ENCODE measurements at regions of chr16 and their contacts with region 1.

Region 1: GRCh38 chr16:49350265-49351095 is 23.1 kb upstream of the C16orf78 start:
- DNase-seq: peak; percentile 86
- ATAC-seq: peak; percentile 52
- H3K4me3 Mint-ChIP-seq: no peak overlapping the region
- H3K27ac Mint-ChIP-seq: no peak overlapping the region
- H3K4me1 Mint-ChIP-seq: peaks cover 24% of the 10 kb centered on the region
- H3K27me3 Mint-ChIP-seq: peaks cover 2% of the 10 kb centered on the region; the same call in 1 of the 2 replicates
- CTCF ChIP-seq: peak; percentile 75

Region 2: GRCh38 chr16:48999508-48999907 is 351.0 kb before region 1 on chr16:
- CTCF ChIA-PET with region 1: interaction called, 11 read pairs
- POLR2A ChIA-PET with region 1: no interaction called
- DNase-seq: no peak
- ATAC-seq: no peak
- H3K4me3 Mint-ChIP-seq: no peak overlapping the region
- H3K27ac Mint-ChIP-seq: no peak overlapping the region
- H3K4me1 Mint-ChIP-seq: peaks cover 22% of the 10 kb centered on the region
- H3K27me3 Mint-ChIP-seq: peaks cover 2% of the 10 kb centered on the region; the same call in 1 of the 2 replicates
- CTCF ChIP-seq: no peak

Region 3: GRCh38 chr16:49312389-49312985 is 38.0 kb before region 1 on chr16:
- CTCF ChIA-PET with region 1: interaction called, 20 read pairs
- POLR2A ChIA-PET with region 1: no interaction called
- DNase-seq: no peak
- ATAC-seq: no peak
- H3K4me3 Mint-ChIP-seq: no peak overlapping the region
- H3K27ac Mint-ChIP-seq: no peak overlapping the region
- H3K4me1 Mint-ChIP-seq: peaks cover 10% of the 10 kb centered on the region
- H3K27me3 Mint-ChIP-seq: no peaks in the 10 kb centered on the region; the same call in 1 of the 2 replicates
- CTCF ChIP-seq: no peak

Region 4: DNA sequence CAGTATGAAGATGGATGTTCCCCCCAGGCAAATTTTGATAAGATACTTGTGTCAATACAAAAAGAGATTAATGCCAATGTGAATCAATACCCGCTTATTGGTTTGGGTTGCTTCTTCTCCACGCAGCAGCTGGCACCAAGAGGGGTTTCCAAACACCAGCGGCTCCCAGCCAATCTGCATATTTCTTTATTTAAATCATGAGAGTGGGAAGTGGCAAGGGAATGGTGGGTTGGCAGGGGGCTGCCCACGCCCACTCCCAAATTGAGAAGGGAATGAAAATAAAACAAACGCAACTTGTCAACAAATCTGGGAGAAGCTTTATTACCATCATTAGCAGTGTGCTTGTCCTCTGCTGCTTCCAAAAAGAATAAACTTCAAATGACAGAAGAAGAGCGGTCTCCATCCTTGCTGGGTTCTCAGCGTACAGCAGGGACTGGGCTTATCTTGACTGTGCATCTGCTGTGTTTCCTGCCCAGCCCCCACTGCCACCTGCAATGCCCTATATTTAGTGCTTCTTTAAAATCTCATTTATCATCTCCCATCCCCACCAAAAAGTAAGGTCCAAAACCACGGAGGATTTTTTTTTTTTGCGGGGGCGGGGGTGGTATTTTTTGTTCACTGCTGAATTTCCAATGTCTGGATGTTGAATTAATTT is 11.7 kb before region 1 on chr16:
- CTCF ChIA-PET with region 1: interaction called, 39 read pairs
- POLR2A ChIA-PET with region 1: no interaction called
- DNase-seq: no peak
- ATAC-seq: no peak
- H3K4me3 Mint-ChIP-seq: no peak overlapping the region
- H3K27ac Mint-ChIP-seq: no peak overlapping the region
- H3K4me1 Mint-ChIP-seq: no peaks in the 10 kb centered on the region
- H3K27me3 Mint-ChIP-seq: no peaks in the 10 kb centered on the region; the same call in 1 of the 2 replicates
- CTCF ChIP-seq: no peak

Measured in WTC11 (cell line).